ENCODE measurements at regions of chr11 and their contacts with region 1.

Region 1: DNA sequence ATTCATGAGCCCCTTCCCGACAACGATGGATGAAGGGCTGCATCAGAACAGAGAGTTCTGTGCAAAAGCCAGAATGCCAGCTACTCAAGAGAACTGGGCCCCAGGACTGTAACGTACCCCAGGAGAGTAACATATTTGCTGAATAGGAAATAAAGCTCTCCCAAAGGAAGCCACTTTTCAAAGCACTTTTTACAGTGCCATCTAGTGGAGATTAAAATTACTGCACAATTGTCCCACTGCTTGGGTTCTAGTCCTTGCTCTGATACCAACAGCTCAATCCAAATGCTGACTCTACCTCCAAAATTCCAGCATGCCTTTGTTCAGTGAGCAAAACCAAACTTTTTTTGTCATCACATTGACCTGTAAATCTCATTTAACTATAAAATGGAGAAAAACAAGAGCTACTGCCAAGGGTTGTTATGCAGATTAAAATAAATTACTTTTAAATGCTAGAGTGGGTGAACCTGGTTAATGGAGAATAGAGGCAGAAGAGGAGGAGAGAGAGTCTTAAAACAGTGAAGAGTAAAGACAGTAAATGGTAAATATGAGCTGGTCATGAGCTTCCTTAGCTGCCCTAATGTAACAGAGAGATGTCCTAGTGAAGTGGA is 87.6 kb upstream of the FSHB start:
- DNase-seq: no peak
- ATAC-seq: peak; percentile 93
- H3K4me3 Mint-ChIP-seq: no peak overlapping the region
- H3K27ac Mint-ChIP-seq: no peak overlapping the region
- H3K4me1 Mint-ChIP-seq: no peaks in the 10 kb centered on the region
- H3K27me3 Mint-ChIP-seq: peaks cover 30% of the 10 kb centered on the region
- CTCF ChIP-seq: peak; percentile 58

Region 2: GRCh38 chr11:30107899-30108298 is 35.3 kb before region 1 on chr11:
- CTCF ChIA-PET with region 1: interaction called, 10 read pairs
- POLR2A ChIA-PET with region 1: no interaction called
- DNase-seq: no peak
- ATAC-seq: no peak
- H3K4me3 Mint-ChIP-seq: no peak overlapping the region
- H3K27ac Mint-ChIP-seq: no peak overlapping the region
- H3K4me1 Mint-ChIP-seq: 0 out of 2 replicates have a peak, but pooled peaks cover 6% of the 10 kb centered on the region
- H3K27me3 Mint-ChIP-seq: peaks cover 75% of the 10 kb centered on the region
- CTCF ChIP-seq: no peak

Region 3: GRCh38 chr11:30196400-30197206 is 53.4 kb after region 1 on chr11:
- CTCF ChIA-PET with region 1: interaction called, 19 read pairs
- POLR2A ChIA-PET with region 1: no interaction called
- DNase-seq: peak; percentile 83
- ATAC-seq: peak; percentile 99
- H3K4me3 Mint-ChIP-seq: no peak overlapping the region
- H3K27ac Mint-ChIP-seq: no peak overlapping the region
- H3K4me1 Mint-ChIP-seq: no peaks in the 10 kb centered on the region
- H3K27me3 Mint-ChIP-seq: peaks cover 7% of the 10 kb centered on the region; the same call in 1 of the 2 replicates
- CTCF ChIP-seq: peak; percentile 33; the same call in 1 of the 2 replicates

Region 4: GRCh38 chr11:30254307-30255298 is 111.4 kb after region 1 on chr11:
- CTCF ChIA-PET with region 1: no interaction called
- POLR2A ChIA-PET with region 1: no interaction called
- DNase-seq: no peak
- ATAC-seq: no peak; the same call in 1 of the 2 replicates
- H3K4me3 Mint-ChIP-seq: no peak overlapping the region
- H3K27ac Mint-ChIP-seq: no peak overlapping the region
- H3K4me1 Mint-ChIP-seq: no peaks in the 10 kb centered on the region
- H3K27me3 Mint-ChIP-seq: peaks cover 14% of the 10 kb centered on the region
- CTCF ChIP-seq: no peak

Measured in WTC11 (cell line).